ENCODE measurements at regions of chr11 and their contacts with region 1.

Region 1: GRCh38 chr11:1820463-1821325 is 14.1 kb upstream of the SYT8 start:
- DNase-seq: peak; percentile 58
- H3K4me3 Mint-ChIP-seq: no peak overlapping the region
- H3K27ac Mint-ChIP-seq: peak overlapping the region; percentile 1
- H3K4me1 Mint-ChIP-seq: peaks cover 18% of the 10 kb centered on the region
- H3K27me3 Mint-ChIP-seq: no peaks in the 10 kb centered on the region
- CTCF ChIP-seq: no peak

Region 2: GRCh38 chr11:1482581-1483444 is 337.9 kb before region 1 on chr11:
- CTCF ChIA-PET with region 1: no interaction called
- POLR2A ChIA-PET with region 1: no interaction called
- intact Hi-C with region 1: no loop called
- DNase-seq: no peak
- H3K4me3 Mint-ChIP-seq: no peak overlapping the region
- H3K27ac Mint-ChIP-seq: no peak overlapping the region
- H3K4me1 Mint-ChIP-seq: peaks cover 6% of the 10 kb centered on the region
- H3K27me3 Mint-ChIP-seq: no peaks in the 10 kb centered on the region
- CTCF ChIP-seq: no peak

Region 3: DNA sequence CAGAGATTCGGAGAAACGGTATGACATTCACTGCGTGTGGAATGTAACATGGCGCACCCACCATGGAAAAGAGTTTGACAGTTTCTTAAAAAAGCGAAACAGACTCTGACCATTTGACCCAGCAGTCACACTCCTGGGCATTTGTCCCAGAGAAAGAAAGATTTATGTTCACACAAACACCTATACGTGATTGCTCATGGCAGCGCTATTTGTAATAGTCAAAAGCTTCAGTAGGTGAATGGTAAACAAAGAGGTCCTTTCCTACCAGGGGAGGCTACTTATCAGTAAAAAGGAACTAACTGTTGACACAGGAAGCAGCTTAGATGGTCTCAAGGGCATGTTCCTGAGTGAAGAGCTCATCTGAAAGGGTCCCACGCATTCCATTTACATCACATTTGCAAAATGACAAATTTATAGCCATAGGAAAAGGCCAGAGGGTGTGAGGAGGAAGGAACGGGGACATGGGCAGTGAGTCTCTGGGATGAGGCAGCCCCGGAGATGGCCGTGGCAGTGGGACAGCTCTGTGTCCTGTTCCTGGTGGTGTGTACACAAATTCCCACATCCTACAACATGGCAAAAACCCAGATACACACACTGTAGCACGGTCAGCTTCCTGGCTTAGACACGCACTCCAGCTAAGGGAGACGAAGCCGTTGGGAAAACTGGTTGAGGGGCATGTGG is 138.3 kb before region 1 on chr11:
- CTCF ChIA-PET with region 1: no interaction called
- POLR2A ChIA-PET with region 1: no interaction called
- intact Hi-C with region 1: no loop called
- DNase-seq: no peak
- H3K4me3 Mint-ChIP-seq: no peak overlapping the region
- H3K27ac Mint-ChIP-seq: no peak overlapping the region
- H3K4me1 Mint-ChIP-seq: no peaks in the 10 kb centered on the region
- H3K27me3 Mint-ChIP-seq: peaks cover 13% of the 10 kb centered on the region
- CTCF ChIP-seq: no peak

Region 4: GRCh38 chr11:1772270-1773130 is 48.2 kb before region 1 on chr11:
- CTCF ChIA-PET with region 1: interaction called, 6 read pairs
- POLR2A ChIA-PET with region 1: interaction called, 15 read pairs
- intact Hi-C with region 1: no loop called
- DNase-seq: peak; percentile 91
- H3K4me3 Mint-ChIP-seq: peak overlapping the region; percentile 60
- H3K27ac Mint-ChIP-seq: peak overlapping the region; percentile 80
- H3K4me1 Mint-ChIP-seq: peaks cover 39% of the 10 kb centered on the region
- H3K27me3 Mint-ChIP-seq: no peaks in the 10 kb centered on the region
- CTCF ChIP-seq: no peak